Adrenal gland (tissue), 19 donors: ENCODE measurements at regions of chr7 and their contacts with region 1.

Region 1: DNA sequence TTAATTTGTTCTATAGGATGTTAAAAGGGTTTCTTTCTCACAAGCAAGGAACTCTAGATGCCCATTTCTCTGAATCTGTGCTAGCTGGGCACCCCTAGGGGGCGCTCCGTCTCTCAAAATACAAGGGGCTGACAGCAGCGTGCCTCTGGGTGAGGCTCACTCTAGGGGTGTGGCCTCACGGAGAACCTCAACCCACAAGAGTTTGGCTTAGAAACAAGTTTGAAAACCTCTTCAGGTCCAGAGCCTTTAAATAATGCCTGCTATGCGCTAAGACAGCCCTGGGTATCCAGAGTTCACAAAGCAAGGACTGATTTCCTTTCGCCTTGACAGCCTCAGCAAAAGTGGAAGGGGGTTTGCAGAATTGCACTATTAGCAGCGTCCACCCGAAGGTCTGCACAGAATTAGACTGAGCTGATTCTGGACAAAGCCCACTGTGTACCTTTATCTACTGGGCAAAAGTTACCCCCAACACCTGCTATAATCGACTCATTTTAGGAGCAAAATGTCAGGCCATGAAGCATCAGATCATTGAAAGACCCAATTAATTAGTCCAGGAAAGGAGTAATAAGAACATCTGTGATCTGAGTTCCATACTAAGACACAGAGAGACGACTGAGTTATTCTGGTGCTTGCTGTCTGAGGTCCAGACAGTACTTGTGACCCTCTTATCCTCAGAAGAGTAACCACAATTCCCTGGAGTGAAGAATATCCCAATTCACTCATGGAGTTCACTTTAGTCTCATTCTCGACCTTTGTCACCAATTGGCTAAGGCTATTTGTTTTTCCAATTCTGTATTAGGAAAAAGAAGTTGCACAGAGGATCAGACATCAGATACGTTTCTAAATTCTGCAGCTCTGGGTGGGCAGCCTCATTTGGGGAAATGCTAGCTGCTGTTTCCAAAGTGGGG is 574 bp upstream of the CPED1 start:
- DNase-seq: peak; percentile 89 to 95 (median 92)
- H3K4me3 ChIP-seq: peak overlapping the region; percentile 12 to 61 (median 30)
- H3K27ac ChIP-seq: peak overlapping the region; percentile 31 to 89 (median 72)
- H3K4me1 ChIP-seq: peaks cover 7 to 20% of the 10 kb centered on the region in 2 donors
- H3K27me3 ChIP-seq: no peaks in the 10 kb centered on the region
- CTCF ChIP-seq: peak; percentile 84 to 95 (median 92)
- POLR2A ChIP-seq: peak in 1 of 2 donors; percentile 15

Region 2: DNA sequence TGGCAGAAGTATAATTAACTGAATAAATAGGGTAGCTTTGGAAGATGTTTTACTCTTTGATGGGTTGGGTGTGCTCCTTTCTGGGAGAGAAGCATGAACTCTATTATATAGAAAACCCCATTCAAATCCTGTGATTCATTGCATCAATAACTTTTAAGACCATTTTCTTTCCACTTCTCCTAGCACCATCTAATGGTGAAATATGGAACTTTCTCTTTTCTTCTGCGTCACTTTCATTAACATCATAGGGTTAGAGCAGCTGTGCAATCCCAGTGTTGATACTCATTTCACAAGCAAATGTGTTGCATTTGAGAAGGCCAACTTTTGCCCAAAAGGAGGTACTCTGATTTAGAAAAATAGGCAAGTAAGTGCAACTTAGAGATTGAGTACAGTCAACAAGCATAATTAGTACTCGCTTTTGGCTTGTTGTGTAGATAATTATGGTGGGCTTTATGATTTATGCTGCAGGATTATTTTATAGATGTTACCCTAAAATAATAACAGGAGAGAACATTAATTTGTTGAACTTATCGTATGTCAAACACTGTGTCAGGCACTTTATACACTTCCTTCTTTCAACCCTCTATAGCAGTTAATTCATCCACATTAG is 93.5 kb after region 1 on chr7:
- intact Hi-C with region 1: loop called (anchors 5 kb)
- DNase-seq: no peak
- H3K4me3 ChIP-seq: no peak overlapping the region
- H3K27ac ChIP-seq: peak overlapping the region in 1 of 5 donors; percentile 43
- H3K4me1 ChIP-seq: peaks cover 7 to 22% of the 10 kb centered on the region in 2 donors
- H3K27me3 ChIP-seq: no peaks in the 10 kb centered on the region
- CTCF ChIP-seq: peak; percentile 68 to 91 (median 77)
- POLR2A ChIP-seq: peak in 1 of 2 donors; percentile 10

Region 3: DNA sequence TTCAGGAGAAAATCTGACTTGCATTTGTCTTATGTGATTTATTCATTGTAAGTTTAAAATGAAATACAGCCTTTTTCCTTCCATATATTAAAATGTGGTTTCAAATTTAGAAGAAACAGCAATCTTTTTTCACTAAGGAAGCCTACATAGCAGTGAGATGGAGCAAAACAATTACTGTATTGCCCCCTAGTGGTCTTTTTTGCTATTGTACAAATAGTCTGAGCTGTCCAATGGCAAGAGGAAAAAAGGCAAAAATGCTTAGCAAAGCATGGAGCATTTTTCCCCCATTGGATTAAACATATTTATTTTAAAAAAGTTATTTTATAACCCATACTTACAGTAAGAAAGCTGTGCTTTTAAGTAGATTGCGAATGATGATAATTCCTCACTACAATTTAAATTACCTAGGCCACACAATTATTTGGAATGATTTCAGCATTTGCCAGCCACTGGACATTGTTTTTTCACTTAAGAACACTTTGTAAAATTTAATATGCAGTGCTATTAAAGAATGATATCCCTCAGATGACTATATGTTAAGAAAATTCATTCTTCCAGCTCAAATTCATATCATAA is 120.1 kb after region 1 on chr7:
- intact Hi-C with region 1: loop called in 1 of 2 experiments (anchors 5 kb)
- DNase-seq: no peak
- H3K4me3 ChIP-seq: no peak overlapping the region
- H3K27ac ChIP-seq: no peak overlapping the region
- H3K4me1 ChIP-seq: no peaks in the 10 kb centered on the region
- H3K27me3 ChIP-seq: no peaks in the 10 kb centered on the region
- CTCF ChIP-seq: peak; percentile 59 to 88 (median 76)
- POLR2A ChIP-seq: no peak

Region 4: GRCh38 chr7:122430710-122431109 is 1442.8 kb after region 1 on chr7:
- intact Hi-C with region 1: no loop called
- DNase-seq: no peak
- H3K4me3 ChIP-seq: no peak overlapping the region
- H3K27ac ChIP-seq: no peak overlapping the region
- H3K4me1 ChIP-seq: peaks cover 0 to 8% of the 10 kb centered on the region in 2 donors
- H3K27me3 ChIP-seq: no peaks in the 10 kb centered on the region
- CTCF ChIP-seq: no peak
- POLR2A ChIP-seq: no peak